Activated naive CD4-positive, alpha-beta T cell treated with anti-CD3 and anti-CD28 coated beads, Interleukin-2, amount 10 ng/mL, durations not matched to agents 7 days and 5 days (primary cell): ENCODE measurements at regions of chrX and their contacts with region 1.

Region 1: GRCh38 chrX:24371391-24371972 is 11.0 kb downstream of the SUPT20HL1 start:
- DNase-seq: peak; percentile 71
- H3K4me3 Mint-ChIP-seq: peak overlapping the region; percentile 39
- H3K27ac Mint-ChIP-seq: no peak overlapping the region
- H3K4me1 Mint-ChIP-seq: peaks cover 17% of the 10 kb centered on the region
- H3K27me3 Mint-ChIP-seq: peaks cover 15% of the 10 kb centered on the region

Region 2: GRCh38 chrX:24259544-24260240 is 111.8 kb before region 1 on chrX:
- CTCF ChIA-PET with region 1: interaction called, 17 read pairs
- DNase-seq: peak; percentile 35
- H3K4me3 Mint-ChIP-seq: no peak overlapping the region
- H3K27ac Mint-ChIP-seq: no peak overlapping the region
- H3K4me1 Mint-ChIP-seq: peaks cover 19% of the 10 kb centered on the region
- H3K27me3 Mint-ChIP-seq: no peaks in the 10 kb centered on the region

Region 3: GRCh38 chrX:24294620-24295019 is 76.9 kb before region 1 on chrX:
- CTCF ChIA-PET with region 1: interaction called, 17 read pairs
- DNase-seq: peak; percentile 50
- H3K4me3 Mint-ChIP-seq: no peak overlapping the region
- H3K27ac Mint-ChIP-seq: no peak overlapping the region
- H3K4me1 Mint-ChIP-seq: no peaks in the 10 kb centered on the region
- H3K27me3 Mint-ChIP-seq: peaks cover 4% of the 10 kb centered on the region

Region 4: GRCh38 chrX:24498975-24499374 is 127.5 kb after region 1 on chrX:
- CTCF ChIA-PET with region 1: interaction called, 23 read pairs
- DNase-seq: no peak
- H3K4me3 Mint-ChIP-seq: no peak overlapping the region
- H3K27ac Mint-ChIP-seq: peak overlapping the region; percentile 83
- H3K4me1 Mint-ChIP-seq: peaks cover 31% of the 10 kb centered on the region
- H3K27me3 Mint-ChIP-seq: no peaks in the 10 kb centered on the region